CD8-positive, alpha-beta memory T cell (primary cell): ENCODE measurements at regions of chr6 and their contacts with region 1.

Region 1: GRCh38 chr6:43769526-43770416 is at the start of gene VEGFA:
- DNase-seq: peak; percentile 80 to 89 (median 84)
- H3K4me3 ChIP-seq: peak within 1 kb of the TSS; percentile 71
- H3K4me3 Mint-ChIP-seq: peak within 1 kb of the TSS; percentile 83 to 95 (median 91)
- H3K27ac ChIP-seq: peak within 1 kb of the TSS; percentile 92
- H3K27ac Mint-ChIP-seq: peak within 1 kb of the TSS; percentile 26 to 93 (median 84)
- H3K4me1 ChIP-seq: peaks cover 5% of the 10 kb centered on the region
- H3K4me1 Mint-ChIP-seq: peaks cover 13 to 24% (median 15%) of the 10 kb centered on the region in 3 donors
- H3K27me3 ChIP-seq: peaks cover 25% of the 10 kb centered on the region
- H3K27me3 Mint-ChIP-seq: peaks cover 20 to 30% of the 10 kb centered on the region in 2 donors
- total RNA-seq, gene VEGFA: 16.4 to 17.5 TPM

Region 2: DNA sequence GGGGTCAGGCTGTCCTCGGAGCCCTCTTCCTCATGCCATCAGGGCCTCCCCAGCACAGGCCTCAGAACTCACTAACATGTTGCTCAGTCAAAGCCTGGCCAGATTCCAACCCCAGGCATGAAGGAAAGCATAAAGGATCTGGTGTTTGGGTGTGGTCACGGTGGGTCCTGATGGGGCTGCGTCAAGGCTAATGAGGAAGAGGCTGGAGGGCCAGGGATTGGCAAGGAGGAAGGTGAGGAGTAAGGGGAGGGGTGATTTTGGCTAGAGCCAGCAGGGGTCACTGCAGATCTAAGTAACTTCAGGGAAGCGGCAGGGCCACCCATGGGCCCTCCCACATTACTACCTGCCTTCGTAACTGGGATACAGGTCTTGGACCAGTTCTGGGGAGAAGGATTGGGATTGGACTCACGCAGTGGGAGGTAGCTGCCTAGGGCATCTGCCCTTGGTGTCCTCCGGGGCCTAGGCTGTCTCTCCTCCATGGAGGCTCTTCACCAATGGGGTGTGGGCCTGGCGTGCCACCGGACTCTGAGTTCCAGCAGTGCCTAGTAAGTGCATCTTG is 46.0 kb before region 1 on chr6:
- CTCF ChIA-PET with region 1: interaction called, 31 read pairs
- POLR2A ChIA-PET with region 1: interaction called, 4 read pairs
- DNase-seq: peak; percentile 31 to 76 (median 61)
- H3K4me3 ChIP-seq: no peak overlapping the region
- H3K4me3 Mint-ChIP-seq: peak overlapping the region in 2 of 7 donors; percentile 12 to 16
- H3K27ac ChIP-seq: no peak overlapping the region
- H3K27ac Mint-ChIP-seq: peak overlapping the region in 5 of 8 donors; percentile 0 to 93 (median 80)
- H3K4me1 ChIP-seq: peaks cover 26% of the 10 kb centered on the region
- H3K4me1 Mint-ChIP-seq: peaks cover 23 to 33% (median 28%) of the 10 kb centered on the region in 3 donors
- H3K27me3 ChIP-seq: no peaks in the 10 kb centered on the region
- H3K27me3 Mint-ChIP-seq: peaks cover 1 to 3% of the 10 kb centered on the region in 2 donors

Region 3: GRCh38 chr6:44067173-44068139 is 297.7 kb after region 1 on chr6:
- CTCF ChIA-PET with region 1: interaction called, 65 read pairs
- POLR2A ChIA-PET with region 1: no interaction called
- DNase-seq: no peak
- H3K4me3 ChIP-seq: no peak overlapping the region
- H3K4me3 Mint-ChIP-seq: no peak overlapping the region
- H3K27ac ChIP-seq: peak overlapping the region; percentile 30
- H3K27ac Mint-ChIP-seq: peak overlapping the region in 1 of 8 donors; percentile 90
- H3K4me1 ChIP-seq: no peaks in the 10 kb centered on the region
- H3K4me1 Mint-ChIP-seq: peaks cover 0 to 3% (median 3%) of the 10 kb centered on the region in 3 donors
- H3K27me3 ChIP-seq: no peaks in the 10 kb centered on the region
- H3K27me3 Mint-ChIP-seq: peaks cover 5 to 11% of the 10 kb centered on the region in 2 donors

Region 4: GRCh38 chr6:44074439-44075136 is 304.8 kb after region 1 on chr6:
- CTCF ChIA-PET with region 1: interaction called, 72 read pairs
- POLR2A ChIA-PET with region 1: interaction called, 11 read pairs
- DNase-seq: peak; percentile 44 to 78 (median 56)
- H3K4me3 ChIP-seq: peak overlapping the region; percentile 46
- H3K4me3 Mint-ChIP-seq: peak overlapping the region; percentile 77 to 96 (median 86)
- H3K27ac ChIP-seq: peak overlapping the region; percentile 88
- H3K27ac Mint-ChIP-seq: peak overlapping the region in 4 of 8 donors; percentile 7 to 41 (median 24)
- H3K4me1 ChIP-seq: peaks cover 17% of the 10 kb centered on the region
- H3K4me1 Mint-ChIP-seq: peaks cover 17 to 22% (median 18%) of the 10 kb centered on the region in 3 donors
- H3K27me3 ChIP-seq: no peaks in the 10 kb centered on the region
- H3K27me3 Mint-ChIP-seq: peaks cover 12 to 15% of the 10 kb centered on the region in 2 donors

Region 5: GRCh38 chr6:44086931-44087574 is 317.3 kb after region 1 on chr6:
- CTCF ChIA-PET with region 1: interaction called, 72 read pairs
- POLR2A ChIA-PET with region 1: no interaction called
- DNase-seq: no peak
- H3K4me3 ChIP-seq: no peak overlapping the region
- H3K4me3 Mint-ChIP-seq: no peak overlapping the region
- H3K27ac ChIP-seq: no peak overlapping the region
- H3K27ac Mint-ChIP-seq: peak overlapping the region in 2 of 8 donors; percentile 9 to 47
- H3K4me1 ChIP-seq: no peaks in the 10 kb centered on the region
- H3K4me1 Mint-ChIP-seq: no peaks in the 10 kb centered on the region
- H3K27me3 ChIP-seq: no peaks in the 10 kb centered on the region
- H3K27me3 Mint-ChIP-seq: no peaks in the 10 kb centered on the region

Region 6: GRCh38 chr6:44172731-44173500 is 403.1 kb after region 1 on chr6:
- CTCF ChIA-PET with region 1: no interaction called
- POLR2A ChIA-PET with region 1: no interaction called
- DNase-seq: peak; percentile 48 to 80 (median 63)
- H3K4me3 ChIP-seq: no peak overlapping the region
- H3K4me3 Mint-ChIP-seq: no peak overlapping the region
- H3K27ac ChIP-seq: no peak overlapping the region
- H3K27ac Mint-ChIP-seq: peak overlapping the region in 2 of 8 donors; percentile 1 to 72
- H3K4me1 ChIP-seq: peaks cover 3% of the 10 kb centered on the region
- H3K4me1 Mint-ChIP-seq: peaks cover 8 to 14% (median 11%) of the 10 kb centered on the region in 3 donors
- H3K27me3 ChIP-seq: no peaks in the 10 kb centered on the region
- H3K27me3 Mint-ChIP-seq: peaks cover 10 to 14% of the 10 kb centered on the region in 2 donors